Gastrocnemius medialis (tissue), 4 donors: ENCODE measurements at regions of chr3 and their contacts with region 1.

Region 1: DNA sequence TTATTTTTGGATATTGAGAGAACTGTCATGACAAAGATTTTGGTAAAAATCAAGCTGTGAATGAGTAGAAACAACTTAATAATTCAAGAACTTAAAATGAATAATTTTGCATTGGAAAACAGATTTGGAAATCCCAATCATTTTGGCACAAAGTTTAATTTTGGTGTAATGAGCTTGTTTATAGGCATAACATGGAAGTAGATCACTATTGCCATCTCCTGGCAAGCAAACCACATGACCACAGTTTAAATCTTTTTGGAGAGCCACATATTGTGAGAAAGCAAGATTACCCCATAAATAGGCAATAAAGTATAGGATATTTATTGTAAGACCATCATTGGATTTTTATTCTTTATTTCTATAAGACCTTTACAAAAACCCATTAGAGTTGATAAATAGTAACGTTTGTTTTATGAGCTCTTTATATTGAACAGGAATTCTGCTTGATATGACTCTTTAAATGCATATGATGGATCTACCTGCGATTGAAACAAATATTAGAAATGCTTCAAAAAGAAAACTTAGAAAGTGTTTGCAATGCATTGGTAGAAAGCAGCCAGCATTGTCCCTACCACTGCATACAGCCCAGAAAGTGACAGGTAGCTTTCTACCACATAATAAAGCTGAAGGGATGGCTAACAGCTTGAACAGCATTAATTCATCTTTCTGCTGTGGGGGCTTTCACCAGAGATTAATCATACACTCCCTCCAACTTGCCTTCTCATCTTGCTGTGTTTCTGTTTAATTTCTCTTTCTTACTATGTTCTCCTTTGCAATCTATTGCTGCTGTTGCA is 766.8 kb downstream of the TBL1XR1 start:
- DNase-seq: no peak
- ATAC-seq: no peak
- H3K4me3 ChIP-seq: no peak overlapping the region
- H3K27ac ChIP-seq: no peak overlapping the region
- H3K4me1 ChIP-seq: no peaks in the 10 kb centered on the region
- H3K27me3 ChIP-seq: no peaks in the 10 kb centered on the region
- CTCF ChIP-seq: no peak
- POLR2A ChIP-seq: no peak

Region 2: DNA sequence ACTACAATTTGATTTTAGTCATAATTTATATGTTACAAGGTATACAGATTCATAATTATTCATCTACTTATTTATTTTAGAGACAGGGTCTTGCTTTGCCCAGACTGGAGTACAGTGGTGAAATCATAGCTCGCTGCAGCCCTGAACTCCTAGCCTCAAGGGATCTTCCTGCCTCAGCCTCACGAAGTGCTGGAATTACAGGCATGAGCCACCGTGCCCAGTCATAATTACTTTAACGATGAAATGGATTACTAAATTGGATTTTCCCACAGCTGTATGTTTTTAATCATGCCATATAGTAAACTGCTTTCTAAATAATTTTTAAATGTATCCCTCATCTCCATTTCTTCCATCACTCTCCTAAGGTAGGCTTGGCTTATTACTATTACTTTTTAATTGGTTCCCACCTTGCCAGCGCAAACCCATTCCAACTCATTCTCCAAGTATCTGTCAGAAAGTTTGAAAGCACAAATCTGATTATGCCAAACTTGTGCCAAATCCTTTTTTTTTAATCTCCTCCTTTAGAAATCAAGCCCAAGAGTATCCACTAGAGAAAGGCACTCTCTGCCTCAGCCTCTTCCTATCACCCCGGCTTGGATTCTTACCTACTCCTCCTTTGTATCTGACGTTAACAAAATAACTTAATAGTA is 17.8 kb before region 1 on chr3:
- in situ Hi-C with region 1: no loop called
- intact Hi-C with region 1: loop called (anchors 1 kb)
- DNase-seq: no peak
- ATAC-seq: no peak
- H3K4me3 ChIP-seq: no peak overlapping the region
- H3K27ac ChIP-seq: no peak overlapping the region
- H3K4me1 ChIP-seq: no peaks in the 10 kb centered on the region
- H3K27me3 ChIP-seq: no peaks in the 10 kb centered on the region
- CTCF ChIP-seq: no peak
- POLR2A ChIP-seq: no peak